ENCODE measurements at regions of chr12 and their contacts with region 1.

Region 1: DNA sequence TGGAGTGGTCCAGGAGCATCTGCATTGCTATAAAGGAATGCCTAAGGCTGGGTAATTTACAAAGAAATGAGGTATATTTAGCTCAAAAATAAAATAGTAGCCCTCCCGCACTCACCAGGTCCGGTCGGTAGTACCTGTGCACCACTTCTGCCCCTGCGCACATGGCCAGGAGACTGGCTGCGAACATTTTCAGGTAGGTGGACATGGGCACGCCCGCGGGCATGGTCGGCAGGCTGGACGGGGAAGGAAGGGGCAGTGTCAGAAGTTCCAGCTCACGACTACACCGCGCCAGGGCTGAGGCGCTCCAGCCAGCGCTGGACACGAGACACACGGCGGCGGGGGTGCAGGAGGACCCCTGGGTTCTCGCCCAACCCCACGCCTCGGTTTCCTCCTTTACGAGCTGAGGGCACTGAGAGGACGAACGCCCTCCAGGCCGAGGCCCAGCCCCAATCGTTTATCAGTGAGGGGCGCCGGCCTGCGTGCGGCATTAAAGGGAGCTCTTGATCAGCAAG is 9.1 kb upstream of the TDG start:
- DNase-seq: peak; percentile 15
- H3K4me3 Mint-ChIP-seq: peak overlapping the region; percentile 92
- H3K27ac Mint-ChIP-seq: peak overlapping the region; percentile 93
- H3K4me1 Mint-ChIP-seq: peaks cover 48% of the 10 kb centered on the region
- H3K27me3 Mint-ChIP-seq: no peaks in the 10 kb centered on the region

Region 2: DNA sequence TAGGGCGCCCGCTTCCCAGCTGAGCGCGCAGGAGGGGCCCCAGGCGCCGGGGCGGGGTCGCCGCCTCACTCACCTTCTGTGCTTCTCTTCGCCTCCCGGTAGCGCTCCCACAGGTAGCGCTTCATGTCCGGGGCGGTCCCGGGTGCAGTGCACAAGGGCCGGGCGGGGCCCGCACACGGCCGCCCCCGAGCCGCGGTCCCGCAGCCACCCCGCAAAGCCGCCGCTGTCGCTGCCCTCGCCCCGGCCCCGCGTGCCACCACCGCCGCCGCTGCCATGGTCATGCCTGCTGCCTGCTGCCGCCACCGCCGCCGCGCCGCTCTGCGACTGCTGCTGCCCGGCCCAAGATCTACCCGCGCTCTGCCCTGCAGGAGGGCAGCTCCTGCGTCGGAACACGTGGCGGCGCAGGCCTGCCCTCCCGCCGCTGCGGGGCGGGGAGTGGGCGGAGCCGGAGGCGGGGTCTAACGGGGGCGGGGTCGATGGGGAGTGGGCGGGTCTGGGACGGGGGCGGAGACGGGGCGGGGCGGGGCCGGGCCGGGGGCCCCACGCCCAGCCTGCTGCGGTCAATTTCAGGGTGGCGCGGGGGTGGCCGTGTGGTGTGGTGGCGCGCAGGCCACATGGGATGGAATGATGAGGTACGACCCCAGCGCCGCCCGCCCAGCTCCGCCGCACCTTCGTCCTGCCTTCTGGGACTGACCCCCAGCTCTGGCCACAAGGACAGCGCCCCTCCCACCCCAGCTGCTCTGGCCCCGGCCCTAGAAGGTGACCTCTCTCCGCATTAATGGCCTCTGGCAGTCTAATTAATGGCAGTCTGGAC is 115.5 kb before region 1 on chr12 and contains the start of gene NT5DC3:
- CTCF ChIA-PET with region 1: no interaction called
- intact Hi-C with region 1: loop called (anchors 2 kb)
- DNase-seq: peak; percentile 82
- H3K4me3 Mint-ChIP-seq: peak within 1 kb of the TSS; percentile 81
- H3K27ac Mint-ChIP-seq: no peak within 1 kb of the TSS
- H3K4me1 Mint-ChIP-seq: peaks cover 21% of the 10 kb centered on the region
- H3K27me3 Mint-ChIP-seq: no peaks in the 10 kb centered on the region
- total RNA-seq, gene NT5DC3: 6.0 to 6.4 TPM

Region 3: GRCh38 chr12:103908866-103909265 is 47.7 kb before region 1 on chr12:
- CTCF ChIA-PET with region 1: no interaction called
- intact Hi-C with region 1: loop called (anchors 1 kb)
- DNase-seq: no peak
- H3K4me3 Mint-ChIP-seq: no peak overlapping the region
- H3K27ac Mint-ChIP-seq: peak overlapping the region; percentile 28
- H3K4me1 Mint-ChIP-seq: peaks cover 39% of the 10 kb centered on the region
- H3K27me3 Mint-ChIP-seq: no peaks in the 10 kb centered on the region

Region 4: GRCh38 chr12:104064031-104064822 is 107.7 kb after region 1 on chr12 and contains the start of gene HCFC2:
- CTCF ChIA-PET with region 1: no interaction called
- intact Hi-C with region 1: loop called (anchors 2 kb)
- DNase-seq: peak; percentile 91
- H3K4me3 Mint-ChIP-seq: peak within 1 kb of the TSS; percentile 93
- H3K27ac Mint-ChIP-seq: peak within 1 kb of the TSS; percentile 84
- H3K4me1 Mint-ChIP-seq: peaks cover 16% of the 10 kb centered on the region
- H3K27me3 Mint-ChIP-seq: peaks cover 16% of the 10 kb centered on the region
- total RNA-seq, gene HCFC2: 7.4 to 8.3 TPM

Region 5: DNA sequence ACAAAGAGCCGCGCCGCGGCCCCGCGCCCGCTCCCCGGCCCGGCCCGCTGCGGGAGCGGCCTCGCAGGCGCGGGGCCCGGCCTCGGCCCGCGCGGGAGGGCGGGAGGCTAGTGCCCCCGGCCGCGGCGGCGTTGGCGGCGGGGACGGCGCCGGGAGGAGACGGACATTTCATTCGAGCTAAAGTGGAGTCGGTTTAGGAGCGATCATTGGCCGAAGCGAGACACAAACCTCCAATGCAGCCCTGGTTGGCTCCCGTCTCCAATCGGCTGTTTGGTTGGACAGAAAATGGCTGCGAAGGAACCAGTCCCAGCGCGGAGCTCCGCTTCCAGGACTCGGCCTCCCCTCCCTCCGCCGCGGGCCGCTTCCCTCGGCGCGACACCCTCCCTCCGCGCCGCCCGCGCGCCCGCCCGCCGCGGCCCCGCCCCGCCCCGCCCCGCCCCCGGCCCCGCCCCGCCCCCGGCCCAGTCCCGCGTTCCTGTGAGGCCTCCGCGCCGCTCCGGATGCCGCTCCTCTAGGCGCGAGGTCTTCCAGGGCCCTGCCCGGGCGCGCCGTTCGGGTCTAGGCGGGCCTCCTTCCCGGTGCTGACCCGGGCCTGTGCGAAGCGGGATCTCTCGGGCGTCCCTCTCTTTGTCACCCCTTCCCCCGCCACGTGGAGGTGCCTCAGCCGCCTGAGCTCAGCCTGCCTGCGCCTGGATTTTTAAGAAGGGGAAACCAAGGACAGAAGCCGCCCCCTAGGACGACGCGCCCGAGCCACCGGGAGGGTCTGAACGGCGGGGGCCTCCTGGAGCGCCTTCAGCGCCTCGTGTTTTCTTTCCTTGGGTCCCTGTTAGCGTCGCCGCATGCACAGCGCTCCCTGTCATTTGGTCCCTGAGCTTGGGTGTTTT is 181.6 kb after region 1 on chr12 and contains the start of gene NFYB:
- CTCF ChIA-PET with region 1: no interaction called
- intact Hi-C with region 1: loop called (anchors 2 kb)
- DNase-seq: peak; percentile 95
- H3K4me3 Mint-ChIP-seq: peak within 1 kb of the TSS; percentile 84
- H3K27ac Mint-ChIP-seq: peak within 1 kb of the TSS; percentile 84
- H3K4me1 Mint-ChIP-seq: peaks cover 14% of the 10 kb centered on the region
- H3K27me3 Mint-ChIP-seq: no peaks in the 10 kb centered on the region
- total RNA-seq, gene NFYB: 23.3 to 28.3 TPM

Region 6: DNA sequence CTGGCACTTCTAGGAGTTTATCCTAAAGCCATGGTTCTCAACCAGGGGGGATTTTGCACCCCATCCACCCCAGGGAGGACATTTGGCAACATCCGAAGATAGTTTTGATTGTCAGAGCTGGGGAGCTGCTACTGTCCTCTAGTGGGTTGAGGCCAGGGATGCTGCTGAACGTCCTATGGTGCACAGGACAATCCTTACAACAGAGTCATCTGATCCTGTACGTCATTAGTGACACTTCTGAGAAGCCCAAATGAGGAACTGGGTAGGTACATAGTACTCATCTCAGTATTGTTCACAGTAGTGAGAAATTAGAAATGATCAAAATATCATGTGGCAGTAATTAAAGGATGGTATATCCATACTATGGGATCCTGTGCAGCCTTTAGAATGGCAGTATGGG is 685.3 kb after region 1 on chr12:
- CTCF ChIA-PET with region 1: no interaction called
- intact Hi-C with region 1: no loop called
- DNase-seq: no peak
- H3K4me3 Mint-ChIP-seq: no peak overlapping the region
- H3K27ac Mint-ChIP-seq: no peak overlapping the region
- H3K4me1 Mint-ChIP-seq: peaks cover 28% of the 10 kb centered on the region
- H3K27me3 Mint-ChIP-seq: no peaks in the 10 kb centered on the region